ENCODE measurements at regions of chr7 and their contacts with region 1.

Region 1: GRCh38 chr7:112481833-112482670 is 1.3 kb downstream of the LSMEM1 start:
- DNase-seq: peak in 1 of 2 experiments; percentile 13
- H3K4me3 ChIP-seq: no peak overlapping the region
- H3K27ac ChIP-seq: no peak overlapping the region
- H3K4me1 ChIP-seq: no peaks in the 10 kb centered on the region
- H3K27me3 ChIP-seq: no peaks in the 10 kb centered on the region
- CTCF ChIP-seq: no peak
- EP300 ChIP-seq: no peak
- POLR2A ChIP-seq: no peak
- RAD21 ChIP-seq: no peak

Region 2: DNA sequence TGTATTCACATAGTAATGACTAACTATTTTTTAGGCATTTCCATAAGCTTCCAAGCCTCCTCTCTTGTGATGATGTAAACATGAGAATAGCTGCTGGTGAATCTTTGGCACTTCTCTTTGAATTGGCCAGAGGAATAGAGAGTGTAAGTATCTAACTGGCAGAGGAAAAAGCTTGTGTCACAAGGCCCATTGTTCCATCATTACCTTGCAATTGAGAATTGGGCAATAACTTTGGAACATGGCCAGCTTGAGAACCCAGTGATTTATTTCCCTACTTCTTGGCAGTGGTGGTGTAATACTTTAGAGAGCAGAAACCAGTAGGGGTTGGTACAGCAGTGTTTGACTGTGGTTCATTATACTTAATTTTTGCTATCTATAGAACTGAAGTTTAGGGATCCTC is 19.8 kb before region 1 on chr7:
- CTCF ChIA-PET with region 1: interaction called, 10 read pairs
- POLR2A ChIA-PET with region 1: interaction called, 5 read pairs
- DNase-seq: no peak
- H3K4me3 ChIP-seq: no peak overlapping the region
- H3K27ac ChIP-seq: no peak overlapping the region
- H3K4me1 ChIP-seq: no peaks in the 10 kb centered on the region
- H3K27me3 ChIP-seq: no peaks in the 10 kb centered on the region
- CTCF ChIP-seq: no peak
- EP300 ChIP-seq: no peak
- POLR2A ChIP-seq: no peak
- RAD21 ChIP-seq: no peak